HEK293 (cell line): ENCODE measurements at regions of chrX and their contacts with region 1.

Region 1: GRCh38 chrX:103845165-103845653 is 13.2 kb upstream of the RAB9B start:
- H3K4me3 ChIP-seq: no peak overlapping the region
- H3K27ac ChIP-seq: no peak overlapping the region
- H3K4me1 ChIP-seq: no peaks in the 10 kb centered on the region
- CTCF ChIP-seq: 0 out of 2 replicates have a peak, but pooled peaks have one; percentile 33

Region 2: GRCh38 chrX:103716962-103717361 is 128.2 kb before region 1 on chrX:
- CTCF ChIA-PET with region 1: no interaction called
- POLR2A ChIA-PET with region 1: no interaction called
- H3K4me3 ChIP-seq: no peak overlapping the region
- H3K27ac ChIP-seq: no peak overlapping the region
- H3K4me1 ChIP-seq: no peaks in the 10 kb centered on the region
- CTCF ChIP-seq: no peak

Region 3: DNA sequence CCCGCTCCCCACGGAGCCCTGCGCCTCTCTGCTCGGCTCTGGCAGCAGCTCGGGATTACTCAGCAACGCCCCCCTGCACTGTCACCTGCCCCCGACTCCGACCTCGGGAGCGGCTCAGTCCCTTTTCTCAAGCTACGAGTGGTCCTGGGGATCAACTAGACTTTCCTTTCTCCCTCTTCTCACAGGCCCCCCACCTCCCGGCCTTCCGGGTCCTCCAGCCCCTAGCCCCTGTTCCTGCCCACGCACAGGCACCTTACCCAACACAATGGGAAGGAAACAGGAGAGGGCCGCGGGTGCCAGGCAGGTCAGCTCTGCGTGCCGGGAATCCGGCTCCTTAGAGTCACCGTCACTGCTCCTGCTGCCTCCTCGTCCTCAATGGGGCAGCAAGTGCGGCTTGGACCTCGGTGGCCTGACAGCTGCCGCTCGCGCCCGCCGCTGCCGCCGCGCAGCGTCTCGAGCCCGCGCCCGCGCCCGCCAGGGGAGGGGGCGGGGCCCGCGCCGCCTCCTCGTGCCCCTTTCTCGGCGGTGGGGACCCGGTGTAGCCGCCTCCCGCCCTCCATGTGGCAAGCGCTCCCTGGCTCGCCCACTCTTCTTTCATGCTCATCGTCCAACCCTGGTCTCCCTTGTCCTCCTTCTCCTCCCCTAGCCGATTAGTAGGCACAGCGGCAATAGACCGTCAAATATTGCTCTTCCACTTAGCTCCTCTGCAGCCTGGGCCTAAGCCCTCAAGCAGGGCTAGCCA is 13.2 kb before region 1 on chrX and contains the start of gene RAB9B:
- CTCF ChIA-PET with region 1: interaction called, 20 read pairs
- POLR2A ChIA-PET with region 1: interaction called, 6 read pairs
- H3K4me3 ChIP-seq: peak within 1 kb of the TSS; percentile 53
- H3K27ac ChIP-seq: peak within 1 kb of the TSS; percentile 34; the same call in 1 of the 2 replicates
- H3K4me1 ChIP-seq: no peaks in the 10 kb centered on the region
- CTCF ChIP-seq: peak; percentile 37; the same call in 1 of the 2 replicates

Region 4: GRCh38 chrX:103864886-103865534 is 19.8 kb after region 1 on chrX:
- CTCF ChIA-PET with region 1: interaction called, 16 read pairs
- POLR2A ChIA-PET with region 1: no interaction called
- H3K4me3 ChIP-seq: no peak overlapping the region
- H3K27ac ChIP-seq: no peak overlapping the region
- H3K4me1 ChIP-seq: no peaks in the 10 kb centered on the region
- CTCF ChIP-seq: no peak

Region 5: GRCh38 chrX:103918581-103919269 is 73.5 kb after region 1 on chrX:
- CTCF ChIA-PET with region 1: interaction called, 10 read pairs
- POLR2A ChIA-PET with region 1: no interaction called
- H3K4me3 ChIP-seq: peak overlapping the region; percentile 46
- H3K27ac ChIP-seq: peak overlapping the region; percentile 74; the same call in 1 of the 2 replicates
- H3K4me1 ChIP-seq: no peaks in the 10 kb centered on the region
- CTCF ChIP-seq: no peak

Region 6: DNA sequence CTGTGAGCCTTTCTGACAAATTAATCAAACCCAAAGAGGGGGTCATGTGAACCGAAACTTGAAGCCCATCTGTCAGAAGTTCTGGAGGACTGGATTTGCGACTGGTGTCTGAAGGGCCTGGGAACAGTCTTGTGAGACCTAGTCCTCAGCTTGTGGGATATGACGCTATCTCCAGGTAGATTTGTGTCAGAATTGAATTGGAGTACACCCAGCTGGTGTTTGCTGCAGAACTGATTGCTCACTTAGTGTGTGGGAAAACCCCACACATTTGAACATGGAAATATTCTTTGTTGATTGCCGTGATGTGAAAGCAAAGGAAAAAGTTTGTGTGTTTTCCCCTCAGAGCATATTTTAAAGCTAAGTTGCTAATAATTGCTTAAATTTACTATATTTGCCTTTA is 86.9 kb after region 1 on chrX:
- CTCF ChIA-PET with region 1: interaction called, 13 read pairs
- POLR2A ChIA-PET with region 1: no interaction called
- H3K4me3 ChIP-seq: no peak overlapping the region
- H3K27ac ChIP-seq: no peak overlapping the region
- H3K4me1 ChIP-seq: no peaks in the 10 kb centered on the region
- CTCF ChIP-seq: no peak

Region 7: GRCh38 chrX:103941201-103941975 is 96.2 kb after region 1 on chrX:
- CTCF ChIA-PET with region 1: interaction called, 32 read pairs
- POLR2A ChIA-PET with region 1: no interaction called
- H3K4me3 ChIP-seq: no peak overlapping the region
- H3K27ac ChIP-seq: no peak overlapping the region
- H3K4me1 ChIP-seq: no peaks in the 10 kb centered on the region
- CTCF ChIP-seq: no peak

Region 8: DNA sequence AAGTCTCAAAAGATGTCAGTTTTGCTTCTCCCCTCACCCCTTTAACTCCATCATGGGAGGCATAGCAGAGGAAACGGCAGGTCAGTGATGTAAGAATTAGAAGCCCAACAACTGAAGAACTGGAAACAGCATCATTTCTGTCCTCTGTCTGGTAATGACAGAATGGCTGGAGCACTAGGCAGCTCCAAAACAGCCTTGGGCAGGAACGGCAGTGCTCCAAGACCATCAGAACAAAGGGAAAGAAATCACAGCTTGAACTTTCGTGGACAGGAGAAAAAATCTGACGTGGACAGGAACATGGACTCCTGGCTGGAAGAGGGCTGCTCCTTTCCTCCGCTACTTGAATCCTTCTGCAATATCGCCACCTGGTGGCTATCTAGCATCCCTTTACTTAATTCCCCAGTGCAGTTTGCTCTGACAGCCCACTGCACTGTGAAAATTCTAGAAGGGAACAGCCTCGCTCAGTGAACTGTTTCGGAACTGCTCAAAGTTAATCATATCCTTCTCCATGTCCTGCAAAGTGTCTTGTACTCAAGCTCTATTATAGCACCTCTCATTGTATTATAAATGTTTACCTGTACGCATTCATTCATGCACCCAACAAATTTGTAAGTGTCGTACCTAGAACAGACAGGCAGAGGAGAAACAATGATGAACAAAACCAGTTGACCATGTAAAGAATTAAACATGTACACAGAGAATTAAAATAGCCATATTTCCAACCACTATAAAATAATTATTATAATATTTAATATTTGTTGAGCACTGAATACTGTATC is 291.2 kb after region 1 on chrX:
- CTCF ChIA-PET with region 1: interaction called, 37 read pairs
- POLR2A ChIA-PET with region 1: interaction called, 3 read pairs
- H3K4me3 ChIP-seq: peak overlapping the region; percentile 27; the same call in 1 of the 2 replicates
- H3K27ac ChIP-seq: no peak overlapping the region
- H3K4me1 ChIP-seq: no peaks in the 10 kb centered on the region
- CTCF ChIP-seq: peak; percentile 64; the same call in 1 of the 2 replicates